ENCODE measurements at regions of chr10 and their contacts with region 1.

Region 1: DNA sequence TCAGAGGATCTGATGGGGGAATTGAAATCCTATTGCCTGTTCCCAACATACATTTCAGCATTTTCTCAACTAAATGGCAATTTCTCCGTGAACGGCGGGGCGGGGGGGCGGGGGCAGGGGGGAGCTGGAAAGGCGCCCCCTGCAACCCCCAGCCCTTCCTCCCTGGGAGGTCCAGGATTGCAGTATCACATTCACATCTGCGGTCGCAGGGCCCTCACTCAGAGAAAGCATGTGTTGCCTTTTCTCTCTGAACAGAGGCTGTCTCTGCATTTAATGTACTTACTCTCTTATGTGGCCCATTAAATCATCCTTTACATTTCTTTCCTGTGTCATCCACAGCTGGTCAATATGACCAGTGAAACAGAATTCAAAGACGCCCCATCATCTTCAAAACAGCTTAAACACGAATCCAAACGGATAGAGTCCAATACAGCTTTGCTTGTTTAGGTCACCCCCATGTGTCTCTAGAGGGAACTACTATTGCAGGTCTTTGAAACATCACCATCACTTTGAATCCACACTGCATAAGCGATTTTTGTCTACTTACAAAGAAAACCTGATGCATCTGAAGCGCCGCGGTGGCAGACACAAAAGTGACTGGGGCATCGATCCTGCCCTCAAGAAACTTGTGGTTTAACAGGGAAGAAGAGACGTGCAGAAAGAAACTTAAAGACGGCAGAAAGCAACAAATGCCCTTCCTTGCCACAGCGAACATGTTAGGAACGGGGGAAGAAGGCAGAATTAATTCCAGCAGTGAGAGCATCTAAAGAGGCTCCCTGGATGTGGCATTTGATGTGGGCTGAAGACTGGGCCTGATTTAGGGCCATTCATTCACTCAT is 17.0 kb upstream of the ECHDC3 start:
- DNase-seq: peak; percentile 71
- H3K4me3 ChIP-seq: no peak overlapping the region
- H3K27ac ChIP-seq: no peak overlapping the region
- H3K4me1 ChIP-seq: no peaks in the 10 kb centered on the region
- H3K27me3 ChIP-seq: peaks cover 0 to 3% of the 10 kb centered on the region in 2 experiments
- CTCF ChIP-seq: peak; percentile 65 to 73
- POLR2A ChIP-seq: no peak

Region 2: GRCh38 chr10:11424456-11425297 is 300.5 kb before region 1 on chr10:
- CTCF ChIA-PET with region 1: interaction called, 13 read pairs
- POLR2A ChIA-PET with region 1: no interaction called
- dilution Hi-C with region 1: no loop called
- intact Hi-C with region 1: no loop called
- DNase-seq: peak; percentile 56
- H3K4me3 ChIP-seq: no peak overlapping the region
- H3K27ac ChIP-seq: no peak overlapping the region
- H3K4me1 ChIP-seq: no peaks in the 10 kb centered on the region
- H3K27me3 ChIP-seq: peaks cover 0 to 2% of the 10 kb centered on the region in 2 experiments
- CTCF ChIP-seq: peak; percentile 86 to 88
- POLR2A ChIP-seq: no peak

Region 3: DNA sequence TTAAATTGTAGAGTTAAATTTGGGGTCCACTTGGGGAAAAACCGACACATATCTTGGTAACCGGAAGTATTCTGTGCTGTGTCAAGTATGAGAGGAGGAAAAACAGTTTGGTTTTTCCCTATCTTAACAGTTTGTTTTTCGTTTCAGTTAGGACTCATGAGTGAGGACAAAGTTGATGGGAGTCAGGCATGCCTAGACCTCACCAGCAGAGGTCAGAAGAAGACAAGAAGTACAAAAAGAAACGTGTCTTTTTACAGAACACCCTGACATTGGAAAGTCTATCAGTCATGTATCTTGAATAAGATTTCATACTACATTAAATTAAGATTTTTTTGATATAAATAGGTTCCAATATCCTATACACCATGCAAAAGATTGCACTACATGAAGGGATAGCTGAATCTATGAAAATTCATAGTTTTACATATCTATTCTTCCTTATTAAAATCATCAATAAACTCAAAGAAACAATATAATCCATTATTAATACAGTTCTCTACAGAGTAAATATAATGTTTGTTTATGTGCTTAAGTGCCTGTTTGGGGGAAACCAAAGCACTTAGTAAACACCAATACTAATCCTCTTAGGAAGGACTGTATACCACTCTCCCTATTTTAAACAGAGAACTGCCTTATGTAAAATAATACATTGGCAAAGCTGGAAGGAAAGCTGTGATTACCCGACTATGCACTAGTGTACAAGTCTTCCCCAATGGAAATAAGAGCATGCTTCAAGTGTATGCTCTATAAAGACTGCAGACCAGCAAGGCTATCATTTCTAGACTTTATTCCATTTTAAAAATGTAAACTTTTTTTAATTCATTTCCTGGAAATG is 209.3 kb before region 1 on chr10:
- CTCF ChIA-PET with region 1: interaction called, 133 read pairs
- POLR2A ChIA-PET with region 1: no interaction called
- dilution Hi-C with region 1: no loop called
- intact Hi-C with region 1: loop called (anchors 1 kb)
- DNase-seq: peak; percentile 70
- H3K4me3 ChIP-seq: no peak overlapping the region
- H3K27ac ChIP-seq: no peak overlapping the region
- H3K4me1 ChIP-seq: peaks cover 10% of the 10 kb centered on the region
- H3K27me3 ChIP-seq: no peaks in the 10 kb centered on the region
- CTCF ChIP-seq: peak; percentile 63 to 73
- POLR2A ChIP-seq: no peak

Region 4: GRCh38 chr10:11611248-11612020 is 113.7 kb before region 1 on chr10 and contains the start of gene USP6NL:
- CTCF ChIA-PET with region 1: interaction called, 15 read pairs
- POLR2A ChIA-PET with region 1: no interaction called
- dilution Hi-C with region 1: no loop called
- intact Hi-C with region 1: loop called (anchors 1 kb)
- DNase-seq: peak; percentile 88
- H3K4me3 ChIP-seq: peak within 1 kb of the TSS; percentile 52 to 93 (median 70)
- H3K27ac ChIP-seq: peak within 1 kb of the TSS; percentile 54
- H3K4me1 ChIP-seq: peaks cover 32% of the 10 kb centered on the region
- H3K27me3 ChIP-seq: no peaks in the 10 kb centered on the region
- CTCF ChIP-seq: no peak
- POLR2A ChIP-seq: peak; percentile 64
- total RNA-seq, gene USP6NL: 26.9 and 29.2 TPM in 2 replicates

Region 5: GRCh38 chr10:11673346-11674280 is 51.5 kb before region 1 on chr10:
- CTCF ChIA-PET with region 1: interaction called, 11 read pairs
- POLR2A ChIA-PET with region 1: no interaction called
- dilution Hi-C with region 1: no loop called
- intact Hi-C with region 1: no loop called
- DNase-seq: peak; percentile 94
- H3K4me3 ChIP-seq: no peak overlapping the region
- H3K27ac ChIP-seq: peak overlapping the region; percentile 46
- H3K4me1 ChIP-seq: peaks cover 21% of the 10 kb centered on the region
- H3K27me3 ChIP-seq: no peaks in the 10 kb centered on the region
- CTCF ChIP-seq: no peak
- POLR2A ChIP-seq: peak; percentile 57

Region 6: GRCh38 chr10:11713186-11713743 is 11.9 kb before region 1 on chr10:
- CTCF ChIA-PET with region 1: interaction called, 14 read pairs
- POLR2A ChIA-PET with region 1: no interaction called
- dilution Hi-C with region 1: no loop called
- intact Hi-C with region 1: no loop called
- DNase-seq: no peak
- H3K4me3 ChIP-seq: no peak overlapping the region
- H3K27ac ChIP-seq: no peak overlapping the region
- H3K4me1 ChIP-seq: no peaks in the 10 kb centered on the region
- H3K27me3 ChIP-seq: peaks cover 3 to 4% of the 10 kb centered on the region in 2 experiments
- CTCF ChIP-seq: no peak
- POLR2A ChIP-seq: no peak

Region 7: DNA sequence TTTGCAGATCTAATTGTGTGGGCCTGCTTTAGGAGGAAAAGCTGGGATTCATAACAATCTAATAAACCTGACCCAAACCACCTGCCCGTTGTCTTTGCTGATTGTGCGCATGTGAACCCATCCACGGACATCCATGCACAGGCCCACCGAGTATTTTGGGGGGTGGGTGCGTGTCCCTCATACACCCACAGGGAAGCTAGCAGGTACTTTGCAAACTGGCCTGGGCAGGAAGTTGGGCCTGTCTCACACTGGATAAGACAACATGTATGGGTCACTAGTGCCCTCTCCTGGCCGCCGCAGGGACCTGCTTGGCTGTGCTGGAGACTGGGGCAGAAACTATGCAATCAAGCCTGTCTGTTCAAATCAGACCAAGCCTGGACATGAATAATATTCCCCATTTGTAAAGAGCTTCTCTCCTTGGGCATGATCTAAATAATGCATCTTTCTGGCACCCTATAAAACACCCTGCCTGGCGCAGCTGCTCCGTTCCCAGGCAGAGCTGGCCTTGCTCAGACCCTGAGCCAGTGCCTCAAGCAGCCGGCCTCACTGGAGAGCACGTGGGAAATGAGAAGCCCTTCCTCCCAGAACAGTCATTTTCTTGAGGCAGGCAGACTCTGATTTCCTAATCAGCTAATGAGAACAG is 32.8 kb after region 1 on chr10:
- CTCF ChIA-PET with region 1: interaction called, 39 read pairs
- POLR2A ChIA-PET with region 1: no interaction called
- dilution Hi-C with region 1: no loop called
- intact Hi-C with region 1: loop called (anchors 1 kb)
- DNase-seq: peak; percentile 84
- H3K4me3 ChIP-seq: no peak overlapping the region
- H3K27ac ChIP-seq: peak overlapping the region; percentile 60
- H3K4me1 ChIP-seq: peaks cover 10% of the 10 kb centered on the region
- H3K27me3 ChIP-seq: no peaks in the 10 kb centered on the region
- CTCF ChIP-seq: peak; percentile 95
- POLR2A ChIP-seq: no peak

Region 8: DNA sequence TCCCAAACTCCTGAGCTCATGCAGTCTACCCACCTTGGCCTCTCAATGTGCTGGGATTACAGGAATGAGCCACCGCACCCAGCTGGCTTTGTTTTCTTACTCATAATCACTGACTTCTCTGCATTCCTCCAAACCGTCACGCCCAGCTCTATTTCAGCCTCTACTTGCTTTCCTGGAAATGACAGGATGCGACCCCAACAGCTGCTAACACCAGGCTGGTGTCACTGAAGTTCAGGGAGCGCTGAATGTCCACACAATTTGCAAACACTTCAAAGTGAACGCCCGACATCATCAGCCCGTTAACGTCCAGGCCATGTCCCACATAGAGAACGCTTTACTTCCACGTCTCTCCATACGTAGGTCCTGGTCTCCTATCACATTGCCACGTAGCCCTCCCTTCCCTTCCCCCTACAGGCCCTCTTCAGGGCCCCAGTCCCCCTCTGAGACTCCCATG is 85.2 kb after region 1 on chr10:
- CTCF ChIA-PET with region 1: no interaction called
- POLR2A ChIA-PET with region 1: no interaction called
- dilution Hi-C with region 1: no loop called
- intact Hi-C with region 1: no loop called
- DNase-seq: peak; percentile 15
- H3K4me3 ChIP-seq: no peak overlapping the region
- H3K27ac ChIP-seq: no peak overlapping the region
- H3K4me1 ChIP-seq: peaks cover 20% of the 10 kb centered on the region
- H3K27me3 ChIP-seq: no peaks in the 10 kb centered on the region
- CTCF ChIP-seq: no peak
- POLR2A ChIP-seq: no peak

Region 9: DNA sequence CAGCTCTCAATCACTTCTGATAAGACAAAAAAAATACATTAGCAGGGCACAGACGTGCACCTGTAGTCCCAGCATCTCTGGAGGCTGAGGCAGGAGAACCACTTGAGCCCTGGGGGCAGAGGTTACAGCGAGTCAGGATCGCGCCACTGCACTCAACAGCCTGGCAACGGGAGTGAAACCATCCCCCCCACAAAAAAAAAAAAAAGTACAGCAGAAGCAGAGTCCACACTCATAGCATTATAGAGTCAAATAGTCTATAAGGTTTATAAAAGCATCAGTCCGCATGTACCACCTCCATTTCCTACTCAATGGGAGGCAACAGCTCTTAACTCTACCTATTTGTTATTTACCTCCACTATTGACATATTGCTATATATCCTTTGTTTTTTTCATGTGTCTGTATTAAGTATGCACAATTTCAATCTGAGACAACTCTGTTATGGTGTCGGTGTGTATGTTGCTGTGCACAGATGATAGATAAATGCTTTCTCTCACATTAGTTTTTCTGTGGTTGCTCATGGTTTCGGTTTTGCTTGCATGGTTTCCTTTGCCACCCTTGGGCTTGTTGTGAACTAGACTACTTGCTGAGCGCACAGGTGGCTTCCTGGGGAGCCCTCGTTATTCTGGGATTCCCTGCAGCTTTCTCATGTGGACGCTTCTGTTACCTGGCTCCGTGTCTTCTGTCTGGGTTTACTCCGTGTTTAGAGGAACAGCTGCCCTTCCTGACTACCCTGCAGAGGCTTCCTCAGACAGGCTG is 138.4 kb after region 1 on chr10:
- CTCF ChIA-PET with region 1: no interaction called
- POLR2A ChIA-PET with region 1: no interaction called
- dilution Hi-C with region 1: no loop called
- intact Hi-C with region 1: no loop called
- DNase-seq: no peak
- H3K4me3 ChIP-seq: no peak overlapping the region
- H3K27ac ChIP-seq: no peak overlapping the region
- H3K4me1 ChIP-seq: no peaks in the 10 kb centered on the region
- H3K27me3 ChIP-seq: no peaks in the 10 kb centered on the region
- CTCF ChIP-seq: no peak
- POLR2A ChIP-seq: no peak

Region 10: GRCh38 chr10:12656518-12657142 is 931.5 kb after region 1 on chr10:
- CTCF ChIA-PET with region 1: no interaction called
- POLR2A ChIA-PET with region 1: no interaction called
- dilution Hi-C with region 1: no loop called
- intact Hi-C with region 1: no loop called
- DNase-seq: peak; percentile 58
- H3K4me3 ChIP-seq: no peak overlapping the region
- H3K27ac ChIP-seq: no peak overlapping the region
- H3K4me1 ChIP-seq: no peaks in the 10 kb centered on the region
- H3K27me3 ChIP-seq: peaks cover 0 to 3% of the 10 kb centered on the region in 2 experiments
- CTCF ChIP-seq: peak; percentile 56
- POLR2A ChIP-seq: no peak